ENCODE measurements at regions of chr14 and their contacts with region 1.

Region 1: GRCh38 chr14:45253068-45253753 is at the start of gene MIS18BP1:
- DNase-seq: peak; percentile 97
- H3K4me3 ChIP-seq: peak within 1 kb of the TSS; percentile 69 to 98 (median 94)
- H3K27ac ChIP-seq: peak within 1 kb of the TSS; percentile 81
- H3K4me1 ChIP-seq: peaks cover 18% of the 10 kb centered on the region
- H3K27me3 ChIP-seq: no peaks in the 10 kb centered on the region
- CTCF ChIP-seq: peak; percentile 48 to 68
- total RNA-seq, gene MIS18BP1: 22.5 to 25.8 TPM

Region 2: GRCh38 chr14:44961604-44962333 is 291.4 kb before region 1 on chr14 and contains the starts of genes KLHL28 and TOGARAM1:
- CTCF ChIA-PET with region 1: no interaction called
- dilution Hi-C with region 1: no loop called
- in situ Hi-C with region 1: no loop called
- intact Hi-C with region 1: loop called (anchors 1 kb)
- DNase-seq: peak; percentile 100
- H3K4me3 ChIP-seq: peak within 1 kb of the TSS; percentile 86 to 98 (median 95)
- H3K27ac ChIP-seq: peak within 1 kb of the TSS; percentile 85
- H3K4me1 ChIP-seq: peaks cover 6% of the 10 kb centered on the region
- H3K27me3 ChIP-seq: no peaks in the 10 kb centered on the region
- CTCF ChIP-seq: no peak
- total RNA-seq, gene KLHL28: 10.2 to 20.3 TPM
- total RNA-seq, gene TOGARAM1: 10.4 to 18.7 TPM

Region 3: DNA sequence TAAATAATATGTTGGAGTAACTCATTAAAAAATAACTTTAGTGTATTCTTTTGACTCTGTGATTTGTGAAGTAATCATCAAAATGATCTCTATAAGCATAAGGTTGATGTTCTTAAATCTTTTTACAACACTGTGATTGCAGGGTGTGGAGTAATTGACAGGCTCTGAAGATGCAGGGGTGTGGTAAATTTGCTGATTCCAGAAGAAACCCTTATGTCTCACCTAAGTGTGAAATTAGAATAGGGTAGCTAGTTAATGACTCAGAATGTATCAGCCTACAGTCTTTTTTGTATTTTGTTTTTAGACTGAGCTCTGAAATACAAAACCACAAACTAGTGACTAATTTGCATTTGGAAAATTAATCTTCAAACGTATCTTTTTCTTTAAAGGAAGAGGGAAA is 163.4 kb before region 1 on chr14:
- CTCF ChIA-PET with region 1: interaction called, 9 read pairs
- dilution Hi-C with region 1: no loop called
- in situ Hi-C with region 1: no loop called
- intact Hi-C with region 1: loop called (anchors 5 kb)
- DNase-seq: peak; percentile 76
- H3K4me3 ChIP-seq: peak overlapping the region in 1 of 3 experiments; percentile 10
- H3K27ac ChIP-seq: no peak overlapping the region
- H3K4me1 ChIP-seq: peaks cover 38% of the 10 kb centered on the region
- H3K27me3 ChIP-seq: no peaks in the 10 kb centered on the region
- CTCF ChIP-seq: no peak